Activated T-helper 1 cell treated with anti-CD3 and anti-CD28 coated beads, Interleukin-12 subunit alpha, Interleukin-12 subunit beta, Interleukin-2, Interleukin-4 antibody, amounts not matched to agents 30 ng/mL and 10 ng/mL and 1 ng/mL, durations not matched to agents 14 hours and 24 hours and 36 hours (primary cell): ENCODE measurements at regions of chr6 and their contacts with region 1.

Region 1: DNA sequence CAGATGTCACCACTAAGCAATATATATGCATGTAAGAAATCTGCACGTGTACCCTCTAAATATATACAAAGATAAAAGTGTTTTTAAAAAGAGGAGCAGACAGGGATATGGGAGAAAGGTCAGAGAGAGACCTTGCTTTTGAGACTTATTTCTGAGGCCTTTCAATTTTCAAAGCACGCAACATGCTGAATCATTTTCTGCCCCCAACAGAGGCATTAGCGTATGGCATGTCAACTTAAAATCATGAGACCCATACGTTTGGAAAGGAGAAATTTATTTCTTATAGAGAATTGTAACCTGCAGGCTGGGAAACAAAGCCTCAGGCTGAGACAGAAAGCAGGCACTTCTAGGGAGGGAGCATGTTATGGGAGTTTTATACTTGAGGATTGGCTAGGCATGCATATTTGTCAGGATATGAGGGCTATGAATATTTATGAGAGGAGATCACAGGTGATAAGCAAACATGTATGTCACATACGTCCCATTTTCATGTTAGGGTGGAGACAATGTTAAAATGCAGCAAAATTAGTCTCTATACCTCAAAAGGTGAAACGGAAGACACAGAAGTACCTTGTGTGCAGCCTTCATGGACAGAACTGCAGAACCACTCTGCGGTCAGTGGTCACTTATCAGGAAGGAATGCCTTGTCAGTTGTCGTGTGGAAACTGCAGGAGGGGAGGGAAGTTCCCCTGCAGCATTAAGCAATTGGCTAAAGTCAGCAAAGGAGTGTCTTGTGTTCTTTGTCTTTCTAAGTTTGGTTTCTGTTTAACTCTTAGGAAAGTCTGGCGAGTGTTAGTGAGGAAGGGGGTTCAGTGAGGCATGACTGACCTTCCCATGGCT is 6.3 kb upstream of the GABRR2 start:
- DNase-seq: no peak
- H3K4me3 Mint-ChIP-seq: no peak overlapping the region
- H3K27ac Mint-ChIP-seq: no peak overlapping the region
- H3K4me1 Mint-ChIP-seq: no peaks in the 10 kb centered on the region
- H3K27me3 Mint-ChIP-seq: no peaks in the 10 kb centered on the region

Region 2: GRCh38 chr6:89281779-89282246 is 39.5 kb before region 1 on chr6:
- intact Hi-C with region 1: loop called (anchors 5 kb)
- DNase-seq: peak; percentile 12
- H3K4me3 Mint-ChIP-seq: no peak overlapping the region
- H3K27ac Mint-ChIP-seq: no peak overlapping the region
- H3K4me1 Mint-ChIP-seq: peaks cover 5% of the 10 kb centered on the region
- H3K27me3 Mint-ChIP-seq: no peaks in the 10 kb centered on the region

Region 3: GRCh38 chr6:89308525-89309395 is 12.6 kb before region 1 on chr6:
- intact Hi-C with region 1: no loop called
- DNase-seq: no peak
- H3K4me3 Mint-ChIP-seq: no peak overlapping the region
- H3K27ac Mint-ChIP-seq: no peak overlapping the region
- H3K4me1 Mint-ChIP-seq: no peaks in the 10 kb centered on the region
- H3K27me3 Mint-ChIP-seq: peaks cover 2% of the 10 kb centered on the region